Endothelial cell of umbilical vein (primary cell): ENCODE measurements at regions of chr3 and their contacts with region 1.

Region 1: DNA sequence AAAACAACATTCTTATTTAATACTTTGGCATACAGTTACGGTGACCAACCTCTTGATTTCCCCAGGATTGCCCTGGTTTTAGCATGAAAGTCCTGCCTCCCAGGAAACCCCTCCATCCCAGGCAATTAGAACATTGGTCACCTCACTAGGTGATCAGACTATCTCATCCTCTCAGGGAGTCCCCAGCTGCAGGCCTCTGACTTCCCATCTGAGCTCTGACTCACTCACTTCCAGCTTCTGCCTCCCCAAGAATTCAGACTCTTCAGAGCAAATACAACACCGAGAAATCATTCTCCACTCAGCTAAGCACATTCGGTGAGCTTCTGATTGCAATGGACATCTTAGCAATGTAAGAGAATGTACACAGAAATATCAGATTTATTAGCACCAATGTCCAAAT is 92.4 kb upstream of the HES1 start:
- DNase-seq: peak; percentile 77
- H3K4me3 ChIP-seq: no peak overlapping the region
- H3K27ac ChIP-seq: peak overlapping the region; percentile 56
- H3K4me1 ChIP-seq: peaks cover 35% of the 10 kb centered on the region
- H3K27me3 ChIP-seq: no peaks in the 10 kb centered on the region
- CTCF ChIP-seq: no peak
- POLR2A ChIP-seq: no peak

Region 2: GRCh38 chr3:192947421-192947820 is 1096.1 kb before region 1 on chr3:
- CTCF ChIA-PET with region 1: no interaction called
- POLR2A ChIA-PET with region 1: no interaction called
- dilution Hi-C with region 1: no loop called
- intact Hi-C with region 1: no loop called
- DNase-seq: no peak
- H3K4me3 ChIP-seq: no peak overlapping the region
- H3K27ac ChIP-seq: no peak overlapping the region
- H3K4me1 ChIP-seq: no peaks in the 10 kb centered on the region
- H3K27me3 ChIP-seq: peaks cover 2 to 6% of the 10 kb centered on the region in 2 experiments
- CTCF ChIP-seq: no peak
- POLR2A ChIP-seq: no peak

Region 3: DNA sequence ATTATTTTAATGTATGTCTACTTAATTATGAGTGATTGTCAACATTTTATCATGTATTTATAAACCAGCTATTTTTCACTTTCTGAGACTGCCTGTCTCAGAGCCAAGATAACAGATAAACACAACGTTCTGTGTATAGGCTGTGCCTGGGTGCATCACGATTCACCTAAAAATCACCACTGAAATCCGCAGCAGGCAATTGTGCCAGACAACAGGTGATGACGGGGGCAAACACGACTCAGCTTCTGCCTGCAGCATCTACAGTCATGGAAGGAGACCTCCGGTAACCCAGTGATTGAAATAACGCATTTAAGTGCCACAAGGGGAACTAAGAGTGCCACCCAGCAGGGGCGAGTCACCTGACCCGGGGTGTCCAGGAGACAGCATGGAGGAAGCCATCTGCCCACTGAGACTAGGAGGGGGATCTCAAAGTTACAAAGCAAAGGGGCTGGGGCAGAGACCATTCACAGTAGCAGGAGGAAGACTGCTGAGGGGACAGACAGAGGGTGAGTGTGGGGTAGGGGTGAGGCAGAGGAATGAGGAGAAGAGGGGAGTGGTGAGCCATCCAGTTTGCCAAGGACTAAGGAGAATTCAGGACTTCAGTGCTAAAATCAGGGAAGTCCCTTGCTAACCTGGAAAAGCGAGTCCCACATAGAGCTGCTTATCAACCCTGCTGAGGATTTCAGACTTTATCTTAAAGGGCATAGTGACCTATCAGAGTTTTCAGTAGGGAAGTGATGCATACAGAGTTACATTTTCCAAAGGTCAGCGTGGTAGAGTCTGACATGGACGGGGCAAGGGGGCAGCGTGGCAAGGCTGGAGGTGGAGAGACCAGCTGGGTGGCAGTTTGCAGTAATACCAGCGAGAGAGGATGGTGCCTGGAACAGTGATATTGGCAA is 164.3 kb before region 1 on chr3:
- CTCF ChIA-PET with region 1: no interaction called
- POLR2A ChIA-PET with region 1: no interaction called
- dilution Hi-C with region 1: no loop called
- intact Hi-C with region 1: no loop called
- DNase-seq: no peak
- H3K4me3 ChIP-seq: no peak overlapping the region
- H3K27ac ChIP-seq: no peak overlapping the region
- H3K4me1 ChIP-seq: no peaks in the 10 kb centered on the region
- H3K27me3 ChIP-seq: no peaks in the 10 kb centered on the region
- CTCF ChIP-seq: no peak
- POLR2A ChIP-seq: no peak

Region 4: GRCh38 chr3:194058189-194058571 is 14.7 kb after region 1 on chr3:
- CTCF ChIA-PET with region 1: interaction called, 13 read pairs
- POLR2A ChIA-PET with region 1: no interaction called
- dilution Hi-C with region 1: no loop called
- intact Hi-C with region 1: no loop called
- DNase-seq: peak; percentile 60
- H3K4me3 ChIP-seq: peak overlapping the region in 1 of 3 experiments; percentile 29
- H3K27ac ChIP-seq: no peak overlapping the region
- H3K4me1 ChIP-seq: peaks cover 4% of the 10 kb centered on the region
- H3K27me3 ChIP-seq: no peaks in the 10 kb centered on the region
- CTCF ChIP-seq: peak in 1 of 2 donors; percentile 1
- POLR2A ChIP-seq: no peak

Region 5: GRCh38 chr3:194089357-194090177 is 46.1 kb after region 1 on chr3:
- CTCF ChIA-PET with region 1: interaction called, 4 read pairs
- POLR2A ChIA-PET with region 1: no interaction called
- dilution Hi-C with region 1: no loop called
- intact Hi-C with region 1: loop called (anchors 1 kb)
- DNase-seq: peak; percentile 99
- H3K4me3 ChIP-seq: no peak overlapping the region
- H3K27ac ChIP-seq: peak overlapping the region; percentile 94
- H3K4me1 ChIP-seq: peaks cover 22% of the 10 kb centered on the region
- H3K27me3 ChIP-seq: no peaks in the 10 kb centered on the region
- CTCF ChIP-seq: no peak
- POLR2A ChIP-seq: no peak